Heart right ventricle (tissue), 16 donors: ENCODE measurements at regions of chr13 and their contacts with region 1.

Region 1: GRCh38 chr13:59677966-59678814 is 485.5 kb downstream of the DIAPH3 start:
- DNase-seq: peak in 1 of 2 donors; percentile 38
- ATAC-seq: peak; percentile 70 to 94 (median 88)
- H3K4me3 ChIP-seq: no peak overlapping the region
- H3K27ac ChIP-seq: peak overlapping the region in 7 of 10 donors; percentile 14 to 72 (median 53)
- H3K4me1 ChIP-seq: peaks cover 0 to 23% (median 11%) of the 10 kb centered on the region in 9 donors
- H3K27me3 ChIP-seq: no peaks in the 10 kb centered on the region
- CTCF ChIP-seq: peak; percentile 67 to 92 (median 84)

Region 2: GRCh38 chr13:59458908-59459579 is 219.1 kb before region 1 on chr13:
- intact Hi-C with region 1: loop called in 1 of 10 experiments (anchors 10 kb)
- DNase-seq: peak; percentile 19 to 29
- ATAC-seq: peak; percentile 68 to 94 (median 88)
- H3K4me3 ChIP-seq: no peak overlapping the region
- H3K27ac ChIP-seq: peak overlapping the region; percentile 44 to 84 (median 74)
- H3K4me1 ChIP-seq: peaks cover 0 to 20% (median 13%) of the 10 kb centered on the region in 9 donors
- H3K27me3 ChIP-seq: no peaks in the 10 kb centered on the region
- CTCF ChIP-seq: no peak

Region 3: GRCh38 chr13:59494560-59494970 is 183.6 kb before region 1 on chr13:
- intact Hi-C with region 1: loop called in 1 of 10 experiments (anchors 10 kb)
- DNase-seq: peak in 1 of 2 donors; percentile 69
- ATAC-seq: peak; percentile 26 to 91 (median 84)
- H3K4me3 ChIP-seq: no peak overlapping the region
- H3K27ac ChIP-seq: peak overlapping the region in 5 of 10 donors; percentile 24 to 67 (median 44)
- H3K4me1 ChIP-seq: peaks cover 0 to 49% (median 25%) of the 10 kb centered on the region in 9 donors
- H3K27me3 ChIP-seq: no peaks in the 10 kb centered on the region
- CTCF ChIP-seq: no peak

Region 4: DNA sequence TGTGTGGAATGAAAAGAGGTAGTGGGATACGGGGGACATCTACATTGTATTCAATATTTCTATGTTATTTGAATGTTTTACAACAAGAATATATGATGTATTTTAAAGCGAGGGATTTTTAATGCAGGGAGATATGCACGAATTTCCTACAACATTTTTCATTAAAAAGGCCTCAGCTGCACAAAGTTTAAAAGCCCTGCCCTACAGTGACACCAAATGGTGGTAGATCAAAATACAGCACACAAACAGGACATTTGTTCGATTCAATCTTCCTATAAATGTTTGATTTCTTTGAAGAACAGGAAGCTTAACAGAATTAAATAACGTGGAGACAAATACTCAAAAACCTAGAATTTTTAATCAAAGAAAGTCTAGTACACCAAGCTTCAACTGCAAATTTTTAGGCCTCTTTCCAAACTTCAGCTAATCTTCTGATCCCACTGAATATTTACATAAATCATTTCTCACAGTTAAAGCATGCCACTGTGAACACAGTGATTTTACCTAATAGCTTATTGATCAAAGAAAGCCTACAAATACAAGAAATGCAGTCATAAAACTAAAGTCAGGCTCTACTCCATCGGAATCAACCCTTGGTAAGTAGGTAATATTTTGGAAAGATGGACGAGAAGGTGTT is 228.3 kb after region 1 on chr13:
- intact Hi-C with region 1: loop called in 1 of 10 experiments (anchors 10 kb)
- DNase-seq: no peak
- ATAC-seq: no peak
- H3K4me3 ChIP-seq: no peak overlapping the region
- H3K27ac ChIP-seq: no peak overlapping the region
- H3K4me1 ChIP-seq: no peaks in the 10 kb centered on the region
- H3K27me3 ChIP-seq: no peaks in the 10 kb centered on the region
- CTCF ChIP-seq: peak in 7 of 9 donors; percentile 40 to 70 (median 60)

Region 5: GRCh38 chr13:60267498-60268198 is 589.5 kb after region 1 on chr13:
- intact Hi-C with region 1: no loop called
- DNase-seq: no peak
- ATAC-seq: no peak
- H3K4me3 ChIP-seq: peak overlapping the region in 9 of 10 donors; percentile 21 to 55 (median 46)
- H3K27ac ChIP-seq: no peak overlapping the region
- H3K4me1 ChIP-seq: no peaks in the 10 kb centered on the region
- H3K27me3 ChIP-seq: no peaks in the 10 kb centered on the region
- CTCF ChIP-seq: no peak

Region 6: DNA sequence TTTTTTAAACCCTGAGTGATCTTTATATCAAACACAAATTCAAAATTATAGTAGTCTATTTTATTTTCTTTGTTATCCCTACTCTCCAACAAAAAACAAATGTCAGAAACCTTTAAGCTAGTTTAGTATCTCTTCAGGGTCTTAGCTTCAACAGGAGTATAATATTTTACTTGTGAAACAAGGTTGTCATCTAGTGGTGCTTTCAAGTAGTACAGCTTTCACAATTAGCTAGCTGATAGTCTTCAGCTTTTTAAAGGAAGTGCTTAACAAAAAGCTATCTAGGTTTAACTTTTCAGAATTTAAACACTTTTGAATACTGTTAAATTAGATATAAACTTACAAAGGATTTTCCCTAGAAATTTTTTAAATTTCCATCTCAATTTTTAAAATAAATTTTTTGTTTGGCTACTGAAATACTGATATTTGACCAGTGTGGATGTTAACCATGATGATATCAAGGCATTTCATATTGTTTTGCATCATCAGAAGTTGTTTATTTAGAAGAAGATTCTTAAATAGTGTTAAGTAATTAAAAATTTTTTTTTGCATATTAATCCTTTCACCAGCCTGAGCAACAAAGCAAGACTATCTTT is 753.0 kb after region 1 on chr13:
- intact Hi-C with region 1: loop called in 4 of 10 experiments (anchors 10 kb)
- DNase-seq: no peak
- ATAC-seq: peak in 6 of 8 donors; percentile 60 to 79 (median 76)
- H3K4me3 ChIP-seq: no peak overlapping the region
- H3K27ac ChIP-seq: no peak overlapping the region
- H3K4me1 ChIP-seq: no peaks in the 10 kb centered on the region
- H3K27me3 ChIP-seq: no peaks in the 10 kb centered on the region
- CTCF ChIP-seq: peak; percentile 83 to 97 (median 93)